B cell (primary cell): ENCODE measurements at regions of chr13 and their contacts with region 1.

Region 1: GRCh38 chr13:30132623-30133553 is 174.5 kb downstream of the KATNAL1 start:
- DNase-seq: peak; percentile 91
- ATAC-seq: peak; percentile 100
- H3K4me3 ChIP-seq: no peak overlapping the region
- H3K4me3 Mint-ChIP-seq: peak overlapping the region; percentile 69
- H3K27ac ChIP-seq: no peak overlapping the region
- H3K27ac Mint-ChIP-seq: no peak overlapping the region
- H3K4me1 ChIP-seq: peaks cover 4% of the 10 kb centered on the region in 2 donors
- H3K4me1 Mint-ChIP-seq: peaks cover 5% of the 10 kb centered on the region
- H3K27me3 ChIP-seq: no peaks in the 10 kb centered on the region
- H3K27me3 Mint-ChIP-seq: peaks cover under 1% of the 10 kb centered on the region
- CTCF ChIP-seq: peak; percentile 97

Region 2: DNA sequence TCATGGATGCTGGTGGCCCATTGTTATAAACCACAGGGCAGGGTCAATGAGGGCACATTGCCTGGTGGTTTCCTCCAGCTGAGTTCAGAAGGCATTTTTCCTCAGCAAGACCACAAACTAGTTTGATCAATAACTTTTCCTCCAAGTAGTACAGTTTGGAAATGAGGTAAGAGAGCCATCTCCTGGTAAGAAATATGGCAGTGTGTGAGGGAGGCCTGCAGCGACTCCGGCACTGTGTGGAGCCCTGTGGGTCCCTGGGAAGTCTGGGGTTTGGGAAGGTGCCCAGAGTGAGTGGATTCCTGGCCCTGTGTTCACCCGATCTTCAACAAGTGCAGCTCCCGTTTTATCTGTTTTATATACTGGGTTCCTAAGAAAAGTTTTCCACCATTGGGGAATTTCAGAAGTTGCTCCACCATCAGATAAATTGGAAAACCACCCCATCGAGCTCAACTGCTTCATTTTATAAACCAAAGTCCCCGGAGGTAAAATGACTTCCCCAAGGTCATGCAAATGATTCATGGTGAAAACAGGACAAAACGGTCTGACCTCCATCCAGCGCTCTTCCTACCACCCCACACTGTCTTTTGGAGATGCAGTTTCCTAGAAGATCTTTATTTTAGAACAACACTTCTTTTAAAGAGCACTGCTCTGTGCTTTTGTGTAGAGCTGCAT is 26.0 kb after region 1 on chr13:
- CTCF ChIA-PET with region 1: interaction called, 19 read pairs
- POLR2A ChIA-PET with region 1: no interaction called
- intact Hi-C with region 1: no loop called
- DNase-seq: no peak
- ATAC-seq: no peak
- H3K4me3 ChIP-seq: no peak overlapping the region
- H3K4me3 Mint-ChIP-seq: no peak overlapping the region
- H3K27ac ChIP-seq: no peak overlapping the region
- H3K27ac Mint-ChIP-seq: no peak overlapping the region
- H3K4me1 ChIP-seq: peaks cover 0 to 32% of the 10 kb centered on the region in 2 donors
- H3K4me1 Mint-ChIP-seq: peaks cover 48% of the 10 kb centered on the region
- H3K27me3 ChIP-seq: no peaks in the 10 kb centered on the region
- H3K27me3 Mint-ChIP-seq: peaks cover 5% of the 10 kb centered on the region
- CTCF ChIP-seq: no peak

Region 3: GRCh38 chr13:30371649-30372265 is 238.9 kb after region 1 on chr13:
- CTCF ChIA-PET with region 1: interaction called, 13 read pairs
- POLR2A ChIA-PET with region 1: no interaction called
- intact Hi-C with region 1: no loop called
- DNase-seq: peak; percentile 98
- ATAC-seq: peak; percentile 83
- H3K4me3 ChIP-seq: peak overlapping the region; percentile 13 to 47 (median 45)
- H3K4me3 Mint-ChIP-seq: peak overlapping the region; percentile 91
- H3K27ac ChIP-seq: peak overlapping the region; percentile 76 to 78
- H3K27ac Mint-ChIP-seq: peak overlapping the region; percentile 94
- H3K4me1 ChIP-seq: peaks cover 75 to 81% of the 10 kb centered on the region in 2 donors
- H3K4me1 Mint-ChIP-seq: peaks cover 84% of the 10 kb centered on the region
- H3K27me3 ChIP-seq: no peaks in the 10 kb centered on the region
- H3K27me3 Mint-ChIP-seq: no peaks in the 10 kb centered on the region
- CTCF ChIP-seq: no peak

Region 4: DNA sequence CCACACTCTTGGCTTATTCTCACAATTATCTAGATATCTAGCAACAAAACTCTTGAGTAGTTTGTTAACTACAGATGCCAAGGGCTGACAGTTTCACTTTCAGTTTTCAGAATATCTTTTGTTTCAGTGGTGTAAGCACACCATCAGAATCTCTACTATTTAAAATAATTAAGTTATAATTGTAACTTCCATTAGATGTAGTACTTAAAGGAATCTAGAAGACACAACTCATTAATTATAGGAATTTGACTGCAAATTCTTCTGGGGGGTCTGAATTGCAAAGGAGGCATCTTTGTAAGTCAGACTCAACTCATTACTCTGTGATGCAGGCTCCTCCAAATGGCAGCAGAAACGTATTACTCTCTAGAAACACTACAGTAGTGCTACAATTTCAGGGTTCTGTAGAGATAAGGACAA is 440.0 kb after region 1 on chr13:
- CTCF ChIA-PET with region 1: interaction called, 14 read pairs
- POLR2A ChIA-PET with region 1: no interaction called
- intact Hi-C with region 1: loop called (anchors 2 kb)
- DNase-seq: peak; percentile 64
- ATAC-seq: peak; percentile 77
- H3K4me3 ChIP-seq: peak overlapping the region in 4 of 5 experiments; percentile 27 to 65 (median 35)
- H3K4me3 Mint-ChIP-seq: peak overlapping the region; percentile 75
- H3K27ac ChIP-seq: peak overlapping the region; percentile 55 to 81
- H3K27ac Mint-ChIP-seq: peak overlapping the region; percentile 68
- H3K4me1 ChIP-seq: peaks cover 5 to 8% of the 10 kb centered on the region in 2 donors
- H3K4me1 Mint-ChIP-seq: peaks cover 26% of the 10 kb centered on the region
- H3K27me3 ChIP-seq: peaks cover 0 to 3% (median 0%) of the 10 kb centered on the region in 4 experiments
- H3K27me3 Mint-ChIP-seq: no peaks in the 10 kb centered on the region
- CTCF ChIP-seq: peak; percentile 28

Region 5: GRCh38 chr13:30617315-30618185 is 484.7 kb after region 1 on chr13 and contains the start of gene USPL1:
- CTCF ChIA-PET with region 1: interaction called, 11 read pairs
- POLR2A ChIA-PET with region 1: interaction called, 4 read pairs
- intact Hi-C with region 1: no loop called
- DNase-seq: peak; percentile 100
- ATAC-seq: peak; percentile 82
- H3K4me3 ChIP-seq: peak within 1 kb of the TSS; percentile 90 to 98 (median 93)
- H3K4me3 Mint-ChIP-seq: no peak within 1 kb of the TSS
- H3K27ac ChIP-seq: peak within 1 kb of the TSS; percentile 98 to 100
- H3K27ac Mint-ChIP-seq: no peak within 1 kb of the TSS
- H3K4me1 ChIP-seq: peaks cover 36 to 38% of the 10 kb centered on the region in 2 donors
- H3K4me1 Mint-ChIP-seq: peaks cover 35% of the 10 kb centered on the region
- H3K27me3 ChIP-seq: no peaks in the 10 kb centered on the region
- H3K27me3 Mint-ChIP-seq: no peaks in the 10 kb centered on the region
- CTCF ChIP-seq: no peak
- total RNA-seq, gene USPL1: 52.2 and 55.8 TPM in 2 replicates

Region 6: DNA sequence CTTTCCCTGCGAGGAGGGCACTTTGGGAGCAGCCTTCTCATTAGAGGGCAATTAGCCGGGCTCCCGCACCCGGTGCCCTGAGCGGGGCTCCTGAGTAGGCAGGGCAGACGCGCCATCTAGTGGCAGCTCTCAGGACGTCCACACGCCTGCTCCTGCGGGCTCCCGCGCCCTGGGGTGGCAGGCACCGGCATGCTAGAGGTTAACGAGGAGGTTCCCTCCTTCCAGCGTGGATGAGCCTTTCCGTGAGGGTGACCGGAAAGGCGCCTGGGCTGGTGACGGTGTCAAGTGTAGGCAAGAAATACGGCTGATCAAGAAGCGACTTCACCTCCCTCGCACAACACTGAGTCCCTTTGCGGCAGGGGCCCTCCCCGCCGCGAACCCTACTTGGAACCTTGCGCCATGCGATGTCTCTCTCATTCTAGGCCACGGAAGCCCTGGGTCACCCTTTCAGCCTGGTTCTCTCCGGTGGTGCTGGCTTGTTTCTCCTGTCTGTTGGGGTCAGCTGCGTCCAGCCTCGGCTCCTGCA is 670.1 kb after region 1 on chr13:
- CTCF ChIA-PET with region 1: interaction called, 28 read pairs
- POLR2A ChIA-PET with region 1: no interaction called
- intact Hi-C with region 1: loop called (anchors 1 kb)
- DNase-seq: peak; percentile 87
- ATAC-seq: peak; percentile 99
- H3K4me3 ChIP-seq: peak overlapping the region in 3 of 5 experiments; percentile 18 to 37 (median 21)
- H3K4me3 Mint-ChIP-seq: peak overlapping the region; percentile 80
- H3K27ac ChIP-seq: no peak overlapping the region
- H3K27ac Mint-ChIP-seq: no peak overlapping the region
- H3K4me1 ChIP-seq: peaks cover 8 to 9% of the 10 kb centered on the region in 2 donors
- H3K4me1 Mint-ChIP-seq: peaks cover 11% of the 10 kb centered on the region
- H3K27me3 ChIP-seq: peaks cover 0 to 8% (median 0%) of the 10 kb centered on the region in 4 experiments
- H3K27me3 Mint-ChIP-seq: no peaks in the 10 kb centered on the region
- CTCF ChIP-seq: peak; percentile 98